ENCODE measurements at regions of chr9 and their contacts with region 1.

Region 1: GRCh38 chr9:107213561-107214028 is 69.5 kb upstream of the RAD23B start:
- DNase-seq: peak; percentile 41
- ATAC-seq: peak; percentile 99
- H3K4me3 Mint-ChIP-seq: no peak overlapping the region
- H3K27ac Mint-ChIP-seq: peak overlapping the region; percentile 11
- H3K4me1 Mint-ChIP-seq: peaks cover 14% of the 10 kb centered on the region
- H3K27me3 Mint-ChIP-seq: peaks cover 7% of the 10 kb centered on the region

Region 2: GRCh38 chr9:107243751-107244150 is 30.2 kb after region 1 on chr9:
- CTCF ChIA-PET with region 1: no interaction called
- POLR2A ChIA-PET with region 1: no interaction called
- intact Hi-C with region 1: loop called in 1 of 2 experiments (anchors 1 kb)
- DNase-seq: peak; percentile 74
- ATAC-seq: peak; percentile 92
- H3K4me3 Mint-ChIP-seq: no peak overlapping the region
- H3K27ac Mint-ChIP-seq: peak overlapping the region; percentile 84
- H3K4me1 Mint-ChIP-seq: peaks cover 32% of the 10 kb centered on the region
- H3K27me3 Mint-ChIP-seq: peaks cover 2% of the 10 kb centered on the region

Region 3: DNA sequence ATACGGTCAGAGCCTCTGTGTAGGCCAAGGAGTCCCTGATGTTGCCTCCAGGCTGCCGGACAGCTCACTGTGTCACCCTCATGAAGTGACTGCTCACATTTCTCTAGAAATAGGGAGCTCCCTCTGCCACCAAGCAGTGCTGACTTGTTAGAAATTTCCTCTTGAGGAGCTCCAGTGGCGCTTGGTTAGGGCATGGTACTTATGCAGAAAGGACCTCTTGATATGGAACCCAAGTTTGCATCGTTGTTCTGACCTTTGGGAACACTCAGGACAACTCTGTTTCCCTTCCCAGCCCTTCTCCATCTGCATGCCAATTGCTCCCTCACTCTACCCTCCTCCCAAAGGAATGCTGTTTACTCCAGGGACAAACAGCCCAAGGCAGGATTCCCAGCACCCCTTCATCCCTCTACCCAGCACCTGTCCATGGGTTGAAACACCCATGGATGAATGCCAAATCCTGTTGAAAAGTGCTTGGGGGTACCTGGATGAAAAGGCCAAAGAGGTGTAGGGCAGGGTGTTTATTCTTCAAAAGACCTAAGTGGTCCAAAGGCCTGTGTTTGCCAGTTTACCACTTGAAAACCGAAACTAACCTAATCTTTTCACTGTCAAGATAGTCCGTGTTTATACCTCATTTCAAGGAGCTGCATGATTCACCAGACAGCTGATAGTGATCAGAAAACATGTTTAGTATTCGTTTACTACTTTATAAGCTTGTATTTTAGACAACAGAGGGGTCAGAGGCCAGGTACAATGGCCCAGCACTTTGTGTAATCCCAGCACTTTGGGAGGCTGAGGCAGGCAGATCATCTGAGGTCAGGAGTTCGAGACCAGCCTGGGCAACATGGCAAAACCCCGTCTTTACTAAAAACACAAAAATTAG is 224.9 kb after region 1 on chr9:
- CTCF ChIA-PET with region 1: no interaction called
- POLR2A ChIA-PET with region 1: no interaction called
- intact Hi-C with region 1: no loop called
- DNase-seq: no peak
- ATAC-seq: no peak
- H3K4me3 Mint-ChIP-seq: no peak overlapping the region
- H3K27ac Mint-ChIP-seq: no peak overlapping the region
- H3K4me1 Mint-ChIP-seq: no peaks in the 10 kb centered on the region
- H3K27me3 Mint-ChIP-seq: no peaks in the 10 kb centered on the region

Region 4: GRCh38 chr9:107784231-107784958 is 570.8 kb after region 1 on chr9:
- CTCF ChIA-PET with region 1: no interaction called
- POLR2A ChIA-PET with region 1: no interaction called
- intact Hi-C with region 1: no loop called
- DNase-seq: no peak
- ATAC-seq: no peak
- H3K4me3 Mint-ChIP-seq: no peak overlapping the region
- H3K27ac Mint-ChIP-seq: no peak overlapping the region
- H3K4me1 Mint-ChIP-seq: no peaks in the 10 kb centered on the region
- H3K27me3 Mint-ChIP-seq: no peaks in the 10 kb centered on the region

Region 5: DNA sequence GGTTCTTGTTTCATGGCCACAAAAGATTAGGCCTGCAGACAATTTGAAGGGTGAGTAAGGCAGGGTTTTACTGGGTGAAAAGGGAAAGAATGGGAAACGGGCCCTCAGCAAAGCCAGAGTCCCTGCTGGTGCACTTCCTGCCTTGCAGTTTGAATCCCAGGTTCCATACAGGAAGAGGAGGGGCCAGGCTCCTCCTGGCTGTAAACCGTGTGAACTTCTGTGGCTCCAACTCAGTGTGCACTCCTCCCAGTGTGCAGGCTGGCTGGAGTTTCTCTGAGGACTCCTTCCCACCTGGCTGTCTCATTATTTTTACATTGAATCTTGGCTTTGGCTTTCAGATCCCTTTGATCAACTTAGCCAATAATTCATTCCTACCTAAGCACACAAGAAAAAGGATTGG is 643.0 kb after region 1 on chr9:
- CTCF ChIA-PET with region 1: no interaction called
- POLR2A ChIA-PET with region 1: no interaction called
- intact Hi-C with region 1: no loop called
- DNase-seq: no peak
- ATAC-seq: no peak
- H3K4me3 Mint-ChIP-seq: no peak overlapping the region
- H3K27ac Mint-ChIP-seq: no peak overlapping the region
- H3K4me1 Mint-ChIP-seq: no peaks in the 10 kb centered on the region
- H3K27me3 Mint-ChIP-seq: no peaks in the 10 kb centered on the region

Region 6: DNA sequence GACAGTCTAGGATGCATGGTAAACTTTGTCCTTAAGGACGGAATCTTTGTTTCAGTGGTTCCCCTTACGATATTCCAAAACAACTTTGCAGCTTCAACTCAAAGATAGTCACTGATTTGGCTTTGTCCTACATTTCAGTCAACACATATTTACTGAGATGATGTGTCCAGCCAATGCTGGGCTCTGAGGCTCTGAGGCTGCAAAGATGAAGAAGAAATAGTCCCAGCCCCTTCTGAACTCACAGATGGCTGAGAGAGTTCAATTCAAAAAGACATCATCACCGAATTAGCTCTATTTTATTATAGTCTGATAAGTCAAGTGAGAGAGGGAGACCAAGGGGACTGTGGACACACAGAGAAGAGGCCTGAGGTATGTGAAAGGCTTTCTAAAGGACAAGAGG is 1098.2 kb after region 1 on chr9:
- CTCF ChIA-PET with region 1: no interaction called
- POLR2A ChIA-PET with region 1: no interaction called
- intact Hi-C with region 1: no loop called
- DNase-seq: no peak
- ATAC-seq: no peak
- H3K4me3 Mint-ChIP-seq: no peak overlapping the region
- H3K27ac Mint-ChIP-seq: no peak overlapping the region
- H3K4me1 Mint-ChIP-seq: no peaks in the 10 kb centered on the region
- H3K27me3 Mint-ChIP-seq: no peaks in the 10 kb centered on the region